ENCODE measurements at regions of chr3 and their contacts with region 1.

Region 1: GRCh38 chr3:76044601-76045600 is 259.6 kb upstream of the ZNF717 start:
- DNase-seq: no peak
- H3K4me3 ChIP-seq: no peak overlapping the region
- CTCF ChIP-seq: peak; percentile 52

Region 2: DNA sequence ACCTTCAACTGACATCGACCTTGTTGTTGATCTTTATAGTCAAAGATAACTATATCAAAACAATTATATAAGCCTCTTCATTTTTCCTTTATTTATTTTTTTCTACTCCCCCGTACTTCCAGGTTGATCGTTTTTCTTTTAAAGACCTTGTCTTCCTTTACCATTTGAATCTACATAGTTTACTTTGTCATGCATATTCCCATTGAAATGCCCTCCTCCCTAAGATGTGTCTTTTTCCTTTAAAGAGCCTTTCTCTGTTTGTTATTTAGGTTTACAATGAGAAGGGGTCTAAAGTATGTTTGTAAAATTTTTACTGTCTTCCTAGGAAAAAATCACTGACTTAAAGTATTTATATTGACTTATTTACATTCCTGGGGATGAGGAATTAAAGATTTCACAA is 230.1 kb before region 1 on chr3:
- CTCF ChIA-PET with region 1: interaction called, 36 read pairs
- POLR2A ChIA-PET with region 1: no interaction called
- DNase-seq: no peak
- H3K4me3 ChIP-seq: no peak overlapping the region
- CTCF ChIP-seq: no peak

Region 3: GRCh38 chr3:76024640-76025039 is 20.3 kb before region 1 on chr3:
- CTCF ChIA-PET with region 1: interaction called, 55 read pairs
- POLR2A ChIA-PET with region 1: no interaction called
- DNase-seq: no peak
- H3K4me3 ChIP-seq: no peak overlapping the region
- CTCF ChIP-seq: peak; percentile 34

Region 4: DNA sequence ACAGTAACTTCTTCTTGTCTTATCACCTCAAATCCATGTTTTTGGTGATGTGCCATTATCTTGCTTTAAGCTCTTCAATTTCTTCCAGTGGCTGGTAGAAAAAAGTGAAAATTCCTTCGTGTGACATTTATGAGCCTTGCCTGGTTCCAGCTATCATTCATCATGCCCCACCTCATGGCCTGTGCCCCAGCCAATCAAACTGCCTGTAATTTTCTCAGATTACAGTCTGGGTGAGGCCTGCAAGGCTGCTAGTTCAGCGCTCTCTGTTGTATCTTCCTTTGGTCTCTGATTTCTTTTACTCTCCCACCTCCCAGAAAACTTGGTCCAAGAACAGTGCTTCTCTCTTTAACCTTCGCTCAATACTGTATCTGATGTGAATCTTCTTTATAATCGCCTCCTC is 10.2 kb before region 1 on chr3:
- CTCF ChIA-PET with region 1: interaction called, 11 read pairs
- POLR2A ChIA-PET with region 1: no interaction called
- DNase-seq: no peak
- H3K4me3 ChIP-seq: no peak overlapping the region
- CTCF ChIP-seq: no peak